Activated CD4-positive, alpha-beta T cell treated with anti-CD3 and anti-CD28 coated beads for 36 hours (primary cell): ENCODE measurements at regions of chr11 and their contacts with region 1.

Region 1: GRCh38 chr11:61129639-61130523 is 27.6 kb downstream of the CD5 start:
- DNase-seq: peak; percentile 97
- ATAC-seq: peak; percentile 89
- H3K4me3 Mint-ChIP-seq: peak overlapping the region; percentile 14
- H3K27ac Mint-ChIP-seq: peak overlapping the region; percentile 64
- H3K4me1 Mint-ChIP-seq: peaks cover 27% of the 10 kb centered on the region
- H3K27me3 Mint-ChIP-seq: no peaks in the 10 kb centered on the region

Region 2: DNA sequence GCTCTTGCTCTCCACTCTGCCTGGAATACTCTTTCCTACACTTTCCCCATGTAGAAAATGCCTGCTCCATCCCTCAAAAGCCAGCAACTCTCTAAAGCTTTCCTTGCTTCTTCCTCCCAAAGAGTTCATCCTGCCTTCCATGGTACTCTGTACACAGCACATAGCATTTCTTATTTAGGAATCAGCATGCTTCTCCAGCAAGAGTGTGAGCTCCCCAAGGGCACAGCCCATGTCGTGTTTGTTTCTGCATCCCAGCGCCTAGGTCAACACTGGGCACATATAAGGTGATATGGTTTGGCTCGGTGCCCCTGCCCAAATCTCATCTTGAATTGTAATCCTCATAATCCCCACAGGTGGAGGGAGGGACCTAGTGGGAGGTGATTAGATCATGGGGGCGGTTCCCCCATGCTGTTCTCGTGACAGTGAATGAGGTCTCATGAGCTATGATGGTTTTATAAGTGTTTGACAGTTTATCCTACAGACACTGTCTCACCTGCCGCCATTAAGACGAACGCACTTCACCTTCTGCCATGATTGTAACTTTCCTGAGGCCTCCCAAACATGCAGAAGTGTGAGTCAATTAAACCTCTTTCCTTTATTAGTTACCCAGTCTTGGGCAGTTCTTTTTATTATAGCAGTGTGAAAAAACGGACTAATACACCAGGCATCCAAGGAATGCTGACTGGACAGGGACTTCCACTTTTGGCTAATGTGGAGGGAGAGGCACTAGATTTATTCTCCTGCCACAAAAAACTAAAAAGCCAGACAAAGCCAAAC is 23.1 kb after region 1 on chr11:
- CTCF ChIA-PET with region 1: interaction called, 12 read pairs
- POLR2A ChIA-PET with region 1: no interaction called
- intact Hi-C with region 1: no loop called
- DNase-seq: no peak
- ATAC-seq: no peak
- H3K4me3 Mint-ChIP-seq: no peak overlapping the region
- H3K27ac Mint-ChIP-seq: no peak overlapping the region
- H3K4me1 Mint-ChIP-seq: peaks cover 14% of the 10 kb centered on the region
- H3K27me3 Mint-ChIP-seq: no peaks in the 10 kb centered on the region